PC-3 (cell line): ENCODE measurements at regions of chr12 and their contacts with region 1.

Region 1: DNA sequence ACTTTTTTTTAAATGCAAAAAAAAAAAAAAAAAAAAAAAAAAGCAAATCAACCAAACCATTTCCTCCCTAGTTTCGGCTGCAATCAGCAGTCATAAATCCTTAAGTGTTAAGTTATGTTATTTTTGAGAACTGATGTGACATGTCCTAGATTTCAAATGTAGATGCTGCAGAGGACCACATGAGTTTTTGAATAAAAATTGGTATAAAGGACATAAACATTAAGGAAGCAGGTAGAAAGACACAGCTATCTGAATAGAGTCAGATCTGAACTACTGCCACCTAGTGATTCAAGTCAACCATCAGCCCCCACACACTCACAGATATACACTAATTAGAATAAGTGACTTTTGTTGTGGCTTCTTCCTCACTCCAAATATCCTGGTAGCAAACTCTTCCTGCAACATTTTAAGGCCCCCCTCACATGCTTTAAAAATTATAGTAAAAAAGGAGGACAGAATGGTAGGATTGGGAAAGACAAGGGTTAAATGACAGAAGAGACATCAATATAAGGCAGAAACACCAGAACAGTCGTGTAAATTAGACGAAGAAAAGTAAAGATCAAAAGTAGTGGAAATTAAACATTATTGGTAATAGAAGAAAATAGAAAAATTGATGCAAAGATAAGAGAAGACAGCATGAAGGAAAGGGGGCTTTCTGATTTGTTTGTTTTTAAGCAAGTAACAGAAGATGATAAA is 394.5 kb upstream of the ATP2B1 start:
- DNase-seq: peak; percentile 61
- ATAC-seq: peak; percentile 73
- H3K4me3 ChIP-seq: no peak overlapping the region
- H3K27ac ChIP-seq: no peak overlapping the region
- H3K4me1 ChIP-seq: peaks cover 44% of the 10 kb centered on the region
- H3K27me3 ChIP-seq: no peaks in the 10 kb centered on the region
- CTCF ChIP-seq: peak; percentile 83

Region 2: DNA sequence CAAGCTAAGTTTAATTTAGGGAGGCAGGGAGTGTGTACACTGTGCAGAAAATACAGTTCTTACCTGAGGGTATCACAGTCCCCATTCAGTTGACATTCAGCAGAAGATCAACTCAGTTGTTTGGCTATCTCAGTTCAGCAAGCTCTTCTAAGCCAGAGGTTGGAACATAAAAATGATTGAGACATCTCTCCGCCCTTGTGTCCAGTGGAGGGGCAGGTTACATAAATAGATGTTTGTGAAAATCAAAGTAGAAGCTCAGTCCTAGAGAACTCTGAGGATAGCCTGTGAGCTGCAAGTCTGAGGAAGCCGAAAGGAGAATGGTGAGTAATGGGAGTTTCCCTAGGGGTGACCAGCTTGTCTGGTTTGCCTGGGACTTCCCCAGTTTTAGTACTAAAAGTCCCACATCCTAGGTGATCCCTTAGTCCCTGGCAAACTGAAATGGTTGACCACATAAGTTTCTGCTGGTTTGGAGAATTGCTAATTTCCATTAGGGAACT is 143.0 kb before region 1 on chr12:
- CTCF ChIA-PET with region 1: no interaction called
- POLR2A ChIA-PET with region 1: no interaction called
- intact Hi-C with region 1: loop called (anchors 5 kb)
- DNase-seq: peak; percentile 77
- ATAC-seq: peak; percentile 58
- H3K4me3 ChIP-seq: 0 out of 2 replicates have a peak overlapping the region, but pooled peaks have one; percentile 1
- H3K27ac ChIP-seq: peak overlapping the region; percentile 82
- H3K4me1 ChIP-seq: peaks cover 48% of the 10 kb centered on the region
- H3K27me3 ChIP-seq: no peaks in the 10 kb centered on the region
- CTCF ChIP-seq: no peak